ENCODE measurements at regions of chr10 and their contacts with region 1.

Region 1: GRCh38 chr10:103678178-103678526 is 177.2 kb downstream of the SH3PXD2A start:
- DNase-seq: peak; percentile 84
- ATAC-seq: peak; percentile 97
- H3K4me3 ChIP-seq: peak overlapping the region; percentile 49; the same call in 1 of the 2 replicates
- H3K27ac ChIP-seq: peak overlapping the region; percentile 73
- H3K4me1 ChIP-seq: peaks cover 25% of the 10 kb centered on the region
- H3K27me3 ChIP-seq: no peaks in the 10 kb centered on the region
- CTCF ChIP-seq: no peak
- EP300 ChIP-seq: peak; percentile 43 to 50; a peak in 2 of 4 replicates
- POLR2A ChIP-seq: peak; percentile 82
- RAD21 ChIP-seq: no peak

Region 2: GRCh38 chr10:103666087-103666761 is 11.9 kb before region 1 on chr10:
- CTCF ChIA-PET with region 1: interaction called, 31 read pairs
- POLR2A ChIA-PET with region 1: no interaction called
- RAD21 ChIA-PET with region 1: interaction called, 3 read pairs
- SMC1A ChIA-PET with region 1: interaction called, 4 read pairs
- in situ Hi-C with region 1: no loop called
- intact Hi-C with region 1: no loop called
- DNase-seq: no peak
- ATAC-seq: no peak
- H3K4me3 ChIP-seq: no peak overlapping the region
- H3K27ac ChIP-seq: no peak overlapping the region
- H3K4me1 ChIP-seq: no peaks in the 10 kb centered on the region
- H3K27me3 ChIP-seq: no peaks in the 10 kb centered on the region
- CTCF ChIP-seq: peak; percentile 21 to 47 (median 39)
- EP300 ChIP-seq: no peak
- POLR2A ChIP-seq: no peak
- RAD21 ChIP-seq: no peak

Region 3: GRCh38 chr10:103696411-103697145 is 18.4 kb after region 1 on chr10:
- CTCF ChIA-PET with region 1: interaction called, 13 read pairs
- POLR2A ChIA-PET with region 1: interaction called, 4 read pairs
- RAD21 ChIA-PET with region 1: interaction called, 22 read pairs
- SMC1A ChIA-PET with region 1: interaction called, 14 read pairs
- in situ Hi-C with region 1: no loop called
- intact Hi-C with region 1: no loop called
- DNase-seq: no peak
- ATAC-seq: peak; percentile 61
- H3K4me3 ChIP-seq: no peak overlapping the region
- H3K27ac ChIP-seq: peak overlapping the region; percentile 54
- H3K4me1 ChIP-seq: peaks cover 29% of the 10 kb centered on the region
- H3K27me3 ChIP-seq: no peaks in the 10 kb centered on the region
- CTCF ChIP-seq: peak; percentile 33 to 50 (median 44); a peak in 5 of 6 replicates
- EP300 ChIP-seq: no peak
- POLR2A ChIP-seq: peak; percentile 55; the same call in 1 of the 2 replicates
- RAD21 ChIP-seq: no peak

Measured in GM12878 (cell line).